Stomach (tissue), 19 donors: ENCODE measurements at regions of chr1 and their contacts with region 1.

Region 1: GRCh38 chr1:230310381-230311163 is 115.6 kb downstream of the PGBD5 start:
- DNase-seq: peak; percentile 84 to 92
- H3K4me3 ChIP-seq: no peak overlapping the region
- H3K27ac ChIP-seq: no peak overlapping the region
- H3K4me1 ChIP-seq: peaks cover 0 to 14% (median 5%) of the 10 kb centered on the region in 4 donors
- H3K27me3 ChIP-seq: peaks cover 0 to 8% (median 0%) of the 10 kb centered on the region in 3 donors
- CTCF ChIP-seq: peak in 5 of 7 experiments; percentile 86 to 94 (median 91)
- EP300 ChIP-seq: no peak
- POLR2A ChIP-seq: no peak

Region 2: GRCh38 chr1:229661022-229661877 is 649.3 kb before region 1 on chr1:
- intact Hi-C with region 1: loop called (anchors 5 kb)
- DNase-seq: peak; percentile 88 to 91
- H3K4me3 ChIP-seq: no peak overlapping the region
- H3K27ac ChIP-seq: no peak overlapping the region
- H3K4me1 ChIP-seq: peaks cover 0 to 22% (median 9%) of the 10 kb centered on the region in 4 donors
- H3K27me3 ChIP-seq: no peaks in the 10 kb centered on the region
- CTCF ChIP-seq: peak in 5 of 7 experiments; percentile 81 to 92 (median 88)
- EP300 ChIP-seq: no peak
- POLR2A ChIP-seq: no peak

Region 3: GRCh38 chr1:229781453-229781852 is 529.1 kb before region 1 on chr1:
- intact Hi-C with region 1: loop called (anchors 10 kb)
- DNase-seq: peak; percentile 71 to 74
- H3K4me3 ChIP-seq: no peak overlapping the region
- H3K27ac ChIP-seq: no peak overlapping the region
- H3K4me1 ChIP-seq: no peaks in the 10 kb centered on the region
- H3K27me3 ChIP-seq: no peaks in the 10 kb centered on the region
- CTCF ChIP-seq: peak in 3 of 7 experiments; percentile 17 to 52 (median 35)
- EP300 ChIP-seq: no peak
- POLR2A ChIP-seq: no peak

Region 4: DNA sequence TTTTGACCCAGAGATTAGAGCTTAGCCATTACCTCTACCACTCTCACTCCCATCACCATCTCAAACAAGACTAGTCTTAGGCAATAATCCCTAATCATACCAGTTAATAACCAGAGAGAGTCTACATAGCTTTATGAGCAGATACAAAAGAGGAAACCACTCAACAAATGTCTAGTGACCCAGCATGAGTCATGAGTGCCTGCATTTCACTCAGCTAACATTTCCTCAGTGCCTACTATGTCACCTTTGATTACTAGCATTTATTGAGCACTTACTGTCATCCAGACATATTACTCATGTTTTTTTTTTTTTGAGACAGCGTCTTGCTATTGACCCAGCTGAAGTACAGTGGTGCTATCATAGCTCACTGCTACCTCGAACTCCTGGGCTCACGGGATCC is 279.4 kb before region 1 on chr1:
- intact Hi-C with region 1: no loop called
- DNase-seq: no peak
- H3K4me3 ChIP-seq: no peak overlapping the region
- H3K27ac ChIP-seq: no peak overlapping the region
- H3K4me1 ChIP-seq: no peaks in the 10 kb centered on the region
- H3K27me3 ChIP-seq: no peaks in the 10 kb centered on the region
- CTCF ChIP-seq: no peak
- EP300 ChIP-seq: no peak
- POLR2A ChIP-seq: no peak

Region 5: DNA sequence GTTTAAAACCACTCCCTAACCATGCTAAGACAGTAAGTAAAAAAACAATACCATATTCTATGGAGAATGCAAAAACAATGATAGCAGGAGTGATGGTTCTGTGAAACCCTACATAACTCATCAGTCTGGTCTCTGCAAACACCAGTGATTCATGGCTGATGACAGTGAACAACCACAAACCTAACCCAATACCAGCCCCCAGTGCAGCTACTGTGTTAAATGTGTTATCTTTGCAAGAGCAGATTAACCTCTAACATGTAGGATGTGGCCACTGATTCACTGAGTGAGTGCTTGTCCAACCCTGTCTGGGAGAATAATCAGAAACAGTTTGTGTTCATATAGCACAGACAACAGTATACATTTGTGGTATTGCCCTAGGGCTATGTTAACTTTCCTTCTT is 231.5 kb after region 1 on chr1:
- intact Hi-C with region 1: no loop called
- DNase-seq: no peak
- H3K4me3 ChIP-seq: no peak overlapping the region
- H3K27ac ChIP-seq: no peak overlapping the region
- H3K4me1 ChIP-seq: no peaks in the 10 kb centered on the region
- H3K27me3 ChIP-seq: no peaks in the 10 kb centered on the region
- CTCF ChIP-seq: no peak
- EP300 ChIP-seq: no peak
- POLR2A ChIP-seq: no peak